ENCODE measurements at regions of chr19 and their contacts with region 1.

Region 1: DNA sequence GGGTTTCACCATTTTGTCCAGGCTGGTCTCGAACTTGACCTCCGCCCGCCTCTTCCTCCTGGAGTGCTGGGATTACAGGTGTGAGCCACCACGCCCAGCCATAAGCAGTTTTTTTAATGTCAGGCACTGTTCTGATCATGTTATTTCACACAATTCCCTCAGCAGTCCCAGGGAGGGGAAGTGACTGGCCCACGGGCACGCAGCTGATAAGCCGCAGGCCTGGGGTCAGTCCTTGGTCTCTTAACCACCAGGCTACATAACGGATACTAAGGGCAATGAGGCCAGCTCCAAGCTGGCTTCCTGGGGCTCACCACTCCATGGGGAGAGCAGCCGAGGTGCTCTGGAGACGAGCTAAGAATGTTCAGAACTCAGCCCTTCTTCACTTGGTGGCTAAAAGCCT is 13.5 kb downstream of the BRSK1 start:
- DNase-seq: no peak

Region 2: DNA sequence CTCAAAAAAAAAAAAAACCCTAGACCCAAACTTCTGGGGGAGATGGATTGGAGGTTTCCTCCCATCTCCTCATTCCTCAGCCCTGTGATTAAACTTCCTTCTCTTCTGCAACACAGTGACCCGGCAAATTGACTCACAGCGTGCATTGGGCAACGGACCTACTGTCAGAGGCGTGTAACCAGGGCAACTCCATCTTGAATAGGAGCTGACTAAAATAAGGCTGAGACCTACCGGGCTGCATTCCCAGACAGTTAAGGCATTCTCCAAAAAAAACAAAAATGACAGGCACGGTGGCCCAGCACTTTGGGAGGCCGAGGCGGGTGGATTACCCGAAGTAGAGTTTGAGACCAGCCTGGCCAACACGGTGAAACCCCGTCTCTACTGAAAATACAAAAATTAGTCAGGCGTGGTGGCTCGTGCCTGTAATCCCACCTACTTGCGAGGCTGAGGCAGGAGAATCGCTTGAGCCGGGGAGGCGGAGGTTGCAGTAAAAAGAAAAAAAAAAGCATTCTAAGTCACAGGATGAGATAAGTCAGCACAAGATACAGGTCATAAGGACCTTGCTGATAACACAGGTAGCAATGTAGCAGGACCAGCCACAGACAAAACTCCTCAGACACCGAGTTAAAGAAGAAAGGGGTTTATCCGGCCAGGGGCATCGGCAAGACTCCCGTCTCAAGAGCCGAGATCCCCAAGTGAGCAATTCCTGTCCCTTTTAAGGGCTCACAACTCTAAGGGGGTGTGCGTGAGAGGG is 344.5 kb before region 1 on chr19:
- in situ Hi-C with region 1: no loop called
- DNase-seq: peak; percentile 96

Region 3: GRCh38 chr19:55216461-55217198 is 80.6 kb before region 1 on chr19:
- in situ Hi-C with region 1: no loop called
- DNase-seq: peak; percentile 96

Region 4: GRCh38 chr19:55341171-55341588 is 43.9 kb after region 1 on chr19:
- in situ Hi-C with region 1: loop called (anchors 10 kb)
- DNase-seq: peak; percentile 26